ENCODE measurements at regions of chr7 and their contacts with region 1.

Region 1: DNA sequence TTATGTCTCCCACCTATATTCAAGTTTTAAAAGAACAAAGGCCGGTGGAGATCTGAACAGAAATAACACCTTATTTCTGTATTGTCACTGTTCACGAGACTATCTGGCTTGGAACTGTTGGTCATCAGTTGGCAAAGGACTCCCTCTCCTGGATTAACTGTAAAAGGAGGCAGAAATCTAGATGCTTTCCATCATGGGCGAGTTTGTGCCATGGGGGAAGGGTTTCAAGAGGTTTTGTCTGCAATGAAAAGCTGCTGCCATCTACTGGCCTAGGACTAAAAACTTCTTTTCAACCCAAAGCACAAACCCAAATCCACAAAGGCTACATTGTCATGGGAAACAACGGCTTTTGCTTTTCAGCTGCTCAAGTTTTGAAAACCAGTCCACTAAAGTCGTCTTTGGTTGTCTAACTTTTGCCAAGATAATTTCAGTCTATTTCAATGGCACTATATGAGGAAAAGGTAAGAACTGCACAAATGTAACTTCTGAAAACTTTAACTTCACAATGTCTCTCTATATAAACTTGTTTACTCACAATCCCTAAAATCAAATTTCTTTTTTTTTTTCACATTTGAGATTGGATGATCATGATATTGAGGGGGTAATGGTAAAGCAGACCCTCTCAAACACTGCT is 196.8 kb downstream of the SKAP2 start:
- DNase-seq: peak; percentile 80
- ATAC-seq: peak; percentile 98
- H3K4me3 ChIP-seq: no peak overlapping the region
- H3K27ac ChIP-seq: no peak overlapping the region
- H3K4me1 ChIP-seq: peaks cover 4% of the 10 kb centered on the region
- H3K27me3 ChIP-seq: no peaks in the 10 kb centered on the region
- CTCF ChIP-seq: peak; percentile 97

Region 2: DNA sequence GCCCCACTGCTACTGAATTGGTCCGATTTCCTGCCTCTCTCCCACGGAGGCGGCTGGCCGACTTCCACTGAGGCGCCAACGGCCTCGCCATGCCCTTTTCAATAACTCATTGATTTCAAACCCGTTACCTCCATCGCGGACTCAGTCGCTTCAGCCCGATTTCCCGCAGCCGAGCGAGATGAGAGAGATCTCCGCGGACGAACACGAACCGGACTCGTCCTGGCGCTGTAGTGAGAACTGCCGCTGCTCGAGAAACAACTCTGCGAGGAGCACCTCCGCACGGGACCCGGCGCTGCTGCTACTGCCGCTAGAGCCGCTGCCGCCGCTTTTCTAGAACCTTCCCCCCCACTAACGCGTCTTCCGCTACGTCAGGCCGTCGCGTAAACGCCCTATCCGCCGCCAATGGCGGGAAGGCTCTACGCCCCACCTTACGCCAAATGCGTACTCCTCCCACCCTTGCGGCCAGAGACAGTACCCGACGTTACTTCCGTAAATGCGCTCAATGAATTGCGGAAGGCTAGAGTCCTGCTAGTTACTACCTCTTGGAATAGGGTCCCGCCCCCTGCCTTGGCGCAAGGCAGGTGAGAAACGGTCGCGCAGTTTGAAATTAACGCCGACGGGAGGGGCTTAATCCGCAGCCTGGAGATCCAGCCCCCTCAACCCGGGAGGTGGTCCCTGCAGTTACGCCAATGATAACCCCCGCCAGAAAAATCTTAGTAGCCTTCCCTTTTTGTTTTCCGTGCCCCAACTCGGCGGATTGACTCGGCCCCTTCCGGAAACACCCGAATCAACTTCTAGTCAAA is 467.0 kb before region 1 on chr7 and contains the start of gene HNRNPA2B1:
- CTCF ChIA-PET with region 1: no interaction called
- POLR2A ChIA-PET with region 1: no interaction called
- in situ Hi-C with region 1: no loop called
- intact Hi-C with region 1: loop called (anchors 5 kb)
- DNase-seq: peak; percentile 99
- ATAC-seq: peak; percentile 80
- H3K4me3 ChIP-seq: peak within 1 kb of the TSS; percentile 97 to 98
- H3K27ac ChIP-seq: peak within 1 kb of the TSS; percentile 100
- H3K4me1 ChIP-seq: peaks cover 40% of the 10 kb centered on the region
- H3K27me3 ChIP-seq: no peaks in the 10 kb centered on the region
- CTCF ChIP-seq: no peak
- total RNA-seq, gene HNRNPA2B1: 819 TPM

Region 3: GRCh38 chr7:26278770-26279169 is 388.8 kb before region 1 on chr7:
- CTCF ChIA-PET with region 1: no interaction called
- POLR2A ChIA-PET with region 1: no interaction called
- in situ Hi-C with region 1: no loop called
- intact Hi-C with region 1: loop called (anchors 5 kb)
- DNase-seq: no peak
- ATAC-seq: peak; percentile 85; the same call in 1 of the 2 replicates
- H3K4me3 ChIP-seq: no peak overlapping the region
- H3K27ac ChIP-seq: no peak overlapping the region
- H3K4me1 ChIP-seq: 0 out of 2 replicates have a peak, but pooled peaks cover 3% of the 10 kb centered on the region
- H3K27me3 ChIP-seq: no peaks in the 10 kb centered on the region
- CTCF ChIP-seq: peak; percentile 60; the same call in 1 of the 2 replicates

Region 4: DNA sequence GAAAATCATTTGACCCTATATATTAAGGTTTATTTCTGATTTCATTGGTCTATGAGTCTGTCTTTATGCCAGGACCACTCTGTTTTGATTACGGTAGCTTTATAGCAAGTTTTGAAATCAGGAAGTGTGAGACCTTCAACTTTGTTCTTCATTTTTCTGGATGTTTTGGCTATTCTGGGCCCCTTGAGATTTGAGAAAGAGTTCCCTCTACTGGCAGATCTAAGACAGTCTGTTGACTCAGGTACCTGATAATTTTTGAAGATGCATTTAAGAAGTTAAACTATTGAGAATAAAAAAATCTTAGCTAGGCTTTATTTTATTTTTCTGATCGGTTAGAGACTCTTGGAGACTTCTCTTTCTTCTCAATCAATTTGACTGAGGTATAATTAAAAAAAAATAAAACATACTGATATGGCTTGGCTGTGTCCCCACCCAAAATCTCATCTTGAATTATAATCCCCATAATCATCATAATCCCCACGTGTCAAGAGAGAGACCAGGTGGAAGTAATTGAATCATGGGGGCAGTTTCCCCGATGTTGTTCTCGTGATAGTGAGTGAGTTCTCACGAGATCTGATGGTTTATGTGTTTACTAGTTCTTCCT is 166.8 kb before region 1 on chr7:
- CTCF ChIA-PET with region 1: no interaction called
- POLR2A ChIA-PET with region 1: no interaction called
- in situ Hi-C with region 1: no loop called
- intact Hi-C with region 1: loop called (anchors 5 kb)
- DNase-seq: no peak
- ATAC-seq: no peak
- H3K4me3 ChIP-seq: no peak overlapping the region
- H3K27ac ChIP-seq: no peak overlapping the region
- H3K4me1 ChIP-seq: no peaks in the 10 kb centered on the region
- H3K27me3 ChIP-seq: peaks cover 5% of the 10 kb centered on the region; the same call in 1 of the 2 replicates
- CTCF ChIP-seq: peak; percentile 71; the same call in 1 of the 2 replicates

Region 5: GRCh38 chr7:26648554-26648953 is 19.1 kb before region 1 on chr7:
- CTCF ChIA-PET with region 1: no interaction called
- POLR2A ChIA-PET with region 1: no interaction called
- in situ Hi-C with region 1: no loop called
- intact Hi-C with region 1: no loop called
- DNase-seq: no peak
- ATAC-seq: no peak
- H3K4me3 ChIP-seq: no peak overlapping the region
- H3K27ac ChIP-seq: no peak overlapping the region
- H3K4me1 ChIP-seq: no peaks in the 10 kb centered on the region
- H3K27me3 ChIP-seq: peaks cover 2% of the 10 kb centered on the region; the same call in 1 of the 2 replicates
- CTCF ChIP-seq: no peak

Measured in Panc1 (cell line).